Esophagus muscularis mucosa (tissue), 4 donors: ENCODE measurements at regions of chr16 and their contacts with region 1.

Region 1: DNA sequence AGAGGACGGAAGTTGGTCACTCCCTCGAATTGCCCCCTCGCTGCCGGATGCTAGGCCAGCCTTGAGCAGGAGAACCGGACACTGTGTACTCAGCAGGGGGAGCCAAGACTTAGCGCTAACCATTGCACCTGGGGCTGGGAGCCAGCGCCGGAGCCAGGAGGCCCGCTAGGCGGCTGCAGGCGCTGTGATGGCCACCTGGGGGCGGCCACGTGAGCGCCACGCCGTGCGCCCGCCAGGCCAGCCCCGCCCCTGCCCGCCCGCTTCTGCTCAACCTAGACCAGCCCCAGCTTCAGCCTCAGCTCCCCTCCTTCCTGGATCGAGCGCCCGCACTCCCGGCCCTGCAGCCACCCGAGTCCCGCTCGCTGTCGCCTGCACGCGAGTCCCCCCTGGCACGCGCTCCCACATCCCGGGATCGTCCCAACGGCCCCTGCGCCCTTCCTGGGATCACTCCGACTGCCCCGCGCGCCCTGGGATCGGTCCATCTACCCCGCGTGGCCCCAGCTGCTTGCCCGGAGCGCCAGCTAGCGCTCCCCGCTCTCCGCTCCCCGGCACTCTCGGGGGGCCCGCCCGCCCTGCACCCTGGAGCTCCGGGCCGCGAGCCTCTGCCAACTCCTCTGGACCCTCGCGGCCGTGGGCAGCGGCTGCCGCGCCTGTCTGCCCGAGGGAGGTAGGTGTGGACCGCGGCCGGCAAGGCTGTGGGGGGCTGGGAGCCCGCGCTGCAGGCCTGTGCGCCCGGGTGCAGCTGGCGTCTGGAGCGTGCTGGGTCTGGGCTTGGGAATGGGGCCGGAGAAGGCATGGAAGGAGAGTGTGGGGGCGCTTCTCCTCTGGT is at the start of gene EEF2K:
- DNase-seq: peak; percentile 97
- H3K4me3 ChIP-seq: peak within 1 kb of the TSS; percentile 89 to 98 (median 95)
- H3K27ac ChIP-seq: peak within 1 kb of the TSS; percentile 89 to 97 (median 92)
- H3K4me1 ChIP-seq: peaks cover 28 to 52% (median 50%) of the 10 kb centered on the region in 4 donors
- H3K27me3 ChIP-seq: no peaks in the 10 kb centered on the region
- CTCF ChIP-seq: peak; percentile 80 to 93 (median 89)
- EP300 ChIP-seq: no peak
- POLR2A ChIP-seq: peak; percentile 8
- total RNA-seq, gene EEF2K: 18.1 to 37.7 (median 31.6) TPM

Region 2: GRCh38 chr16:22240023-22240710 is 33.9 kb after region 1 on chr16:
- intact Hi-C with region 1: loop called (anchors 5 kb)
- DNase-seq: no peak
- H3K4me3 ChIP-seq: no peak overlapping the region
- H3K27ac ChIP-seq: peak overlapping the region; percentile 65 to 74 (median 68)
- H3K4me1 ChIP-seq: peaks cover 18 to 58% (median 39%) of the 10 kb centered on the region in 4 donors
- H3K27me3 ChIP-seq: no peaks in the 10 kb centered on the region
- CTCF ChIP-seq: no peak
- EP300 ChIP-seq: no peak
- POLR2A ChIP-seq: no peak

Region 3: DNA sequence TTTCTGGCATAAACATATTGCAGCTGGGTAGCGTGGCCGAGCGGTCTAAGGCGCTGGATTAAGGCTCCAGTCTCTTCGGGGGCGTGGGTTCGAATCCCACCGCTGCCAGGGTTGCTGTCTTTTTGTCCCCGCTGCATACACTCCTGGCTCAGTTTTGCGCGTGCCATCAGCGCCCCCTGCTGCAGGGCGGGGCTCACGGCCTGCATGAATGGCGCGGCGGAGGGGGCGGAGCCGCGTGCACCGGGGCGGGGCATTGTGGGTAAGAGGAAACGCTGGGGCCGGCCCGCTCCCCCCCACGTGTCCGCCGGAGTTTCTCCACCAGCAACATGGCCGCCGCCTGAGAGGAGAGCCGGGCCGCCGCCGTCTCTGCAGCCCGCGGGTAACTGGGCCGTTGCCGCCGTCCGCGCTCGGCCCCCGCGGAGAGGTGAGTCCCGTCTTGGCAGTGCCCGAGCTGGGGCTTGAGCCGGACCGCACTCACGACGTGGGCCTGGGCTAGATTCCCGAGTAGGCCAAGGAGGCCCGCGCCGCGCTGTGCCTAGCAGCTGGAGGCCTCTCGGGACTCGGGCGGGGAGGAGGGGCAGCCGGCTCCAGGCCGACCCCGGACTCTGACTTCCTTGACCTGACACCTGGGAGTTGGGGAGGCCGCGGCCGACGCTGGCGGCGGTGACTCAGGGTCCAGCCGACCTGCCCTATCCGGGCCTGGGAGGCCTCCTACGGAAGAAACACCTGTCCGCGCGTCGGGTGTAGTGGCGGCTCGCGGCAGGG is 91.1 kb after region 1 on chr16 and contains the start of gene POLR3E:
- intact Hi-C with region 1: loop called (anchors 2 kb)
- DNase-seq: peak; percentile 100
- H3K4me3 ChIP-seq: peak within 1 kb of the TSS; percentile 85 to 93 (median 90)
- H3K27ac ChIP-seq: peak within 1 kb of the TSS; percentile 92 to 96 (median 96)
- H3K4me1 ChIP-seq: peaks cover 21 to 40% (median 39%) of the 10 kb centered on the region in 4 donors
- H3K27me3 ChIP-seq: peaks cover 0 to 4% (median 0%) of the 10 kb centered on the region in 4 donors
- CTCF ChIP-seq: peak; percentile 92 to 99 (median 96)
- EP300 ChIP-seq: no peak
- POLR2A ChIP-seq: no peak
- total RNA-seq, gene POLR3E: 39.9 to 50.7 (median 49.0) TPM

Region 4: DNA sequence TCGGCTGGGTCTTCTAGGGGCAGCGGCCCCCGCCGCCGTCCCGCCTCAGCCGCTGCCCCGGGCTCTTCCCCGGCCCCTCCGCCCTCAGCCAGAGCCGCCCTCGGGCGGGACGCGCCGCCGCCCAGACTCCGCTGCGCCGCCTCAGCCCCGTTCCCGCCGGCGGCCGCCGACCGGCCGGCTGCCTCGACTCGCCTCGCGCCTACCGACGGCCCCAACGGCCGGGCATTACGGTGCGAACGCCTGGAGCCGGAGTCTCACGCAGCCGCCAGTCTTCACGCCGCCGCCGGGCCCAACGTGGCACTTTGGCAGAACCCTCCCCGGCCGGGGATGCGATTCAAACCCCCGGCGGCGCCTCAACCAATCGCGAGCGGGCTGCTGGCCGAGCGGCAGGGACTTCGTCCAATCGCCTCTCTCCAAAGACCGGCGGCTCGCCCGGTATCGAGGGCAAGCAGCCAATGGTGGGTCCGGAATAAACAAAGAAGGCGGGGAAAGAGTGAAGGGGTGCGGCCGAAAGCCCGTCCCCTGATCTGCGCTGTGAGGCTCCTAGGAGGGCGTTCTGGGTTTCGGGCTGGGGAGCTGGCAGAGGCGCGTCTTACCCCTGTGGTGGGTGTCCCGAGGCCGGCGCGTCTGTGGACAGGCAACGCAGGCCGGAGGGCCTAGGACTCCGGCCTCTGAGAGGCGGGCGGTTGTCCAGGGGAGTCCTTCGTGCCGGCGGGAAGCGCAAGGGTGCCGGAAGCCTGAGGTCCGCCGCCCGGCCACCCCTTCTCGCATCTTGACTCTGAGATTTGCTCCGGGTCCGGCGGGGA is 168.3 kb after region 1 on chr16 and contains the start of gene CDR2:
- intact Hi-C with region 1: loop called (anchors 10 kb)
- DNase-seq: peak; percentile 100
- H3K4me3 ChIP-seq: peak within 1 kb of the TSS; percentile 74 to 99 (median 92)
- H3K27ac ChIP-seq: peak within 1 kb of the TSS; percentile 93 to 98 (median 95)
- H3K4me1 ChIP-seq: peaks cover 28 to 49% (median 46%) of the 10 kb centered on the region in 4 donors
- H3K27me3 ChIP-seq: no peaks in the 10 kb centered on the region
- CTCF ChIP-seq: no peak
- EP300 ChIP-seq: no peak
- POLR2A ChIP-seq: peak; percentile 72
- total RNA-seq, gene CDR2: 37.0 to 54.0 (median 39.5) TPM